ENCODE measurements at regions of chr19 and their contacts with region 1.

Region 1: DNA sequence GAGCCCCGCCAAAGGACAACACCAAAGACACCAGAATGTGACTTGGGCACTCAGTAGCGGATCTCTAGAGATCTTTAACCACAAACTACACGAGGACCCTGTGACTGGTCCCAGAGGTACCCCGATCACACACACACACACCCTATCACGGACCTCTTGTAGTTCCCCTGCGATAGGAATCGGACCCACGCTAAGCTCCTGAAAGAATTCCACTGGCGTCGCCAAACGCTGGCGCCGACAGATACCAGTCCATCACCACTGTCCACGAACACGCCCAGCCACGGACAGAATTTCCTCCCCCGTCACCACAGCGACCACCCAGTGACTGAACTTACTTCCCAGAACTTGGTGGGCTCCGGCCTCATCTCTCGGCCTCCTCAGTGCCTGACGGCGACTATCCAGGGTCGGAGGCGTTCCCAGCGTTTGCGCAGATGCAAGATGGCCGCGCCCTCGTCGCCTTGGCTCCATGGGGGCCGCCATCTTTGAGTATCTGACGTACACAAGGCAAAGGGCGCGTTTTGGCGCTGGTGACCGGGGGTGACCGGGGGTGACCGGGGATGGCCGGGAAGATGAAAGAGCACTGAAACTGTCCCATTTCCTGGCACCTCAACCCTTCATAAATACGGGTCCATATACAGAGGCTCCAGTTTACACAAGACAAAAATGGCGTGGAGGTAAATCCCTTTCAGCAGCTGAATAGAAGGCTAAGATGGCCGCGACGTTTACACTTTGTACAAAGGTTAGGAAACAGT is at the start of gene ZNF615:
- DNase-seq: peak; percentile 96
- H3K4me3 ChIP-seq: peak within 1 kb of the TSS; percentile 64 to 92 (median 79)
- H3K27ac ChIP-seq: peak within 1 kb of the TSS; percentile 87 to 90 (median 88)
- H3K4me1 ChIP-seq: peaks cover 0 to 16% (median 9%) of the 10 kb centered on the region in 4 donors
- H3K27me3 ChIP-seq: no peaks in the 10 kb centered on the region
- CTCF ChIP-seq: no peak
- EP300 ChIP-seq: no peak
- POLR2A ChIP-seq: peak; percentile 4
- total RNA-seq, gene ZNF615: 13.4 to 17.6 (median 15.2) TPM

Region 2: DNA sequence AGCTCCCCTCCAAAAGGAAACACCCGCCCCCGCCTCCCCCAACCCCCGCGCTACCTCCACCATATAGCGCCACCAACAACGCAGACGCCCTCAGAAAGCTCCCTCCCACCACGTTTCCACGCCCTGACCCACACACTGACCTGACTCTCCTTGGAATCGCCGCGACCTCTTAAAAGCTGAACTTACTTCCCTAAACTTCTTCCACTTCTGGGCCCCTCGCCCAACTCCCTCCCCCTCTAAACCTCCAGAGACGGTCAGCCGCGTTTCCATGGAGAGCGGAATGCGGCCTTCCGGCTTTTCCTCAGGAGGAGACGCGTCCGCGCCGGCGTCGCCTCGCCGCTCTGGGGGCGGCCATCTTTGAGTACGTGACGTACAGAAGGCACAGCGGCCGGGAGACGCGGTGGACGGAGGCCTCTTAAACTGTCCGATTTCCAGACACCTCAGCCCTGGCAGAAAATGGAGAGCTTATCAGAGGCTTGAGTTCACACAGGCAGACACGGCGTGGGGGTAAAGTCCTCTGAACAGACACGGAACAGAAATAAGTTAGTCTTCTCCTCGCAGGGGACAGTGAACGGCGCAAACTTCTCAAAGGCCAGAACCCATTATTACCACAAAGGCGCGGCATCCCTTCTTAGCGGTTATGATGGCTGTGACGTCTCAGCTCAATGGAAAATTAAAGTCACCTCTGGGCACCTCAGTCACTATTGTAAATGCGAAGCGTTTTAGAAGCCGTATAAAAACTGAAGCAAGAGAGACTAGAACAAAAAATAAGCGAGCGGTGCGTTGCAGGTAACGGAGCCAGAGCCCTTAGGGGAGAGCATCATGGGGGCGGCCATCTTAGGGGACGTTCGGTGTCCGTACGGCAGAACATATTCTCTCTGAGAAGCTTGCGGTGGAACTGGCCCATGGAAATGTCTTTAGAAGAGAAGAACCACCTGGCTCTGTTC is 40.8 kb after region 1 on chr19 and contains the start of gene ZNF432:
- intact Hi-C with region 1: loop called (anchors 5 kb)
- DNase-seq: peak; percentile 98
- H3K4me3 ChIP-seq: peak within 1 kb of the TSS; percentile 63 to 86 (median 70)
- H3K27ac ChIP-seq: peak within 1 kb of the TSS; percentile 91 to 95 (median 94)
- H3K4me1 ChIP-seq: peaks cover 3 to 23% (median 19%) of the 10 kb centered on the region in 4 donors
- H3K27me3 ChIP-seq: no peaks in the 10 kb centered on the region
- CTCF ChIP-seq: peak in 1 of 3 experiments; percentile 7
- EP300 ChIP-seq: no peak
- POLR2A ChIP-seq: peak; percentile 28
- total RNA-seq, gene ZNF432: 8.6 to 10.1 (median 9.2) TPM